ENCODE measurements at regions of chr4 and their contacts with region 1.

Region 1: DNA sequence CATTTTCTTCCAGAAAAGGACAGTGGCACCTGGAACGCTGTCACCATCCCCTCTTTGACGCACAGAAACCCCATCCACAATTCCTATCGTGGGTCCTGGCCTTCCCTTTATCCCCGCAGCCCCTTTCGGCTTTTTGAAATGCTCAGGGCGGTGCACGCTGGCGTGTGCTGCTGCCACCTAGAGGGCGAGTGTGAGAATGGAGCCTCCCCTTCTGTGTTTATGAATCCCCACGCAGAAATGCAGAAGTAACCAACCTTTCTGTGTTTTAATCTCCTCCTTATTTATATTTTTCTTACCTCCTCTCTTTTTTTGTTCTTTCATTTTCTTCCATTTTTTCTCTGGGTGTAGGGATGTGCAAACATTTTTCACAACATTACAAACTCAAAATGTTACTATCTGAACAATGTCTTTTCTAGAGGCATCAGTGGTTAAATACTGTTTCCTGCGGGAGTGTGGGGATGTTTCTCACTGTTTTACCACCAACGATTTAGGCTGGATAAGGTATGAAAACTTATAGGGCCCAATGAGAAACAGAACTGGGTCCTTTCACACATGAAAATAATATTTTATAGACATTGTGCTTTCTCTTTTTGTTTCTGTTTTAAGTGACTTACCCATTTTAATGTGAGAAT is 50.0 kb downstream of the TMA16 start:
- DNase-seq: peak in 1 of 2 donors; percentile 77
- H3K4me3 ChIP-seq: peak overlapping the region; percentile 34 to 53
- H3K27ac ChIP-seq: no peak overlapping the region
- H3K4me1 ChIP-seq: no peaks in the 10 kb centered on the region
- H3K27me3 ChIP-seq: no peaks in the 10 kb centered on the region
- CTCF ChIP-seq: peak; percentile 56 to 93 (median 90)

Region 2: GRCh38 chr4:162645381-162645780 is 899.1 kb before region 1 on chr4:
- intact Hi-C with region 1: loop called (anchors 5 kb)
- DNase-seq: no peak
- H3K4me3 ChIP-seq: no peak overlapping the region
- H3K27ac ChIP-seq: no peak overlapping the region
- H3K4me1 ChIP-seq: no peaks in the 10 kb centered on the region
- H3K27me3 ChIP-seq: no peaks in the 10 kb centered on the region
- CTCF ChIP-seq: peak in 2 of 3 experiments; percentile 30 to 52

Region 3: DNA sequence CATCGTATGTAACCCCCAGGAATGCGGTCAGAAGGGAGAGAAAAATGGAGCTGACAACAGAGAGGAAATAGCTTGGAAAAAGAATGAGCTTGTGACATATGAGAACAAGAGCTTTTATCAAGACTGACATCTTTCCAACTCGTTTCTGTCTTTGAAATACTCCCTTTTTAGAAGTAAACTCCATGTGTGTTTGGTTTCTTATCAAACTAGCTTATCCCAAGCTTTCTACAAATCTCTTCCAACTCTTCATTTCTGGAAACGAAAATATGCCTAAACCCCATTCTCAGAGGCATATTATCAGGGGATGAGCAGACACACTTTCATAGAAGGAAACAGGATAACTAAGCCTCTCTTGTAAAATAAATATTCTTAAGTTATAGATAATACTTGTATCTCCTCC is 613.2 kb before region 1 on chr4:
- intact Hi-C with region 1: no loop called
- DNase-seq: no peak
- H3K4me3 ChIP-seq: peak overlapping the region in 1 of 2 donors; percentile 14
- H3K27ac ChIP-seq: no peak overlapping the region
- H3K4me1 ChIP-seq: no peaks in the 10 kb centered on the region
- H3K27me3 ChIP-seq: no peaks in the 10 kb centered on the region
- CTCF ChIP-seq: no peak

Region 4: DNA sequence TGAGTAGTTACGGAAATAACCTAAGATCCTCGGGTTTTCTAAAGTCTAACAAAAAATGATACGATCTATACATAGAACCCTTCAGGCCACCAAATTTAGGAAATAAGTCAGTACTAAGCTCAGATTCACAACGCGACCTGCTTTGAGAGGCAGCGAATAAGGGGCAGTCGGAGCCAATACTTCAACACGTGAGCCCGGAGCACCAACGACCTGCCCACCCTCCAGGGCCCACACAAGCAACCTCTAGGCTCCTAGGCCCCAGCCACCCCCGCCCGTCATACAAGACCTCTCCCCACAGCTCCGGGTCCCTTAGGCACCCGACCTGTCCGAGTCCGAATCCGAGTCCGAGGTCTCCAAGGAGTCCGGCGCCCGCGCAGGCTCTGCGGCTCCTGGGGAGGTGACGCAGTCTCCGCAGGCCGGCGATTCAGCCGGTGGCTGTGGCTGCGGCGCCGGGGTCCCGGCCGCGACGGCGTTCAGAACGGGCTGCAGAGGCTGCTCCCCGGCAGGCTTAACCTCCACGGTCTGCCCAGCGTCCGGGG is 378.4 kb before region 1 on chr4:
- intact Hi-C with region 1: loop called (anchors 5 kb)
- DNase-seq: peak; percentile 10 to 75
- H3K4me3 ChIP-seq: peak overlapping the region; percentile 65 to 85
- H3K27ac ChIP-seq: peak overlapping the region; percentile 92
- H3K4me1 ChIP-seq: peaks cover 0 to 5% of the 10 kb centered on the region in 2 donors
- H3K27me3 ChIP-seq: no peaks in the 10 kb centered on the region
- CTCF ChIP-seq: no peak

Region 5: DNA sequence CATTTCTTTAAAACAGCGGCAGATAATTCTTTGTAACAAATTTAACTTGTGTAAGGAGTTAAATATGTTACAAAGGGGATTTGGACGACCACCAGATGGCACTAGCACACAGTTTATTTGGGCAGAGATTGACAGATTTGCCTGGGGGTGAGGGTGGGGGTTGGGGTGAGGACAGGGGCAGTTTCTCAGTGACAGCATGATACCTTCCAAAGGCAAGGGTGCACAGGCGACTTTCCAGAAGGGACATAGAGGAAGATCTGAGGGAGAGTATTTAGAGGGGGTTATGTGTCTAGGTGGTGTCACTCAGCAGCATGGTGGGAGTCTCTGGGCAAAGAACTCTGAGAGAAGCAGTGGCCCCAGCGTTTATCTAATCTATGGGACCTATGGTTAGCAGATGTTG is 59.6 kb before region 1 on chr4:
- intact Hi-C with region 1: loop called (anchors 2 kb)
- DNase-seq: no peak
- H3K4me3 ChIP-seq: no peak overlapping the region
- H3K27ac ChIP-seq: no peak overlapping the region
- H3K4me1 ChIP-seq: no peaks in the 10 kb centered on the region
- H3K27me3 ChIP-seq: no peaks in the 10 kb centered on the region
- CTCF ChIP-seq: peak in 2 of 3 experiments; percentile 37 to 60